ENCODE measurements at regions of chr1 and their contacts with region 1.

Region 1: GRCh38 chr1:154220071-154220969 is at the start of gene UBAP2L:
- DNase-seq: peak; percentile 97 to 100 (median 99)
- ATAC-seq: peak; percentile 83
- H3K4me3 ChIP-seq: peak within 1 kb of the TSS; percentile 95
- H3K4me3 Mint-ChIP-seq: peak within 1 kb of the TSS; percentile 91
- H3K27ac ChIP-seq: peak within 1 kb of the TSS; percentile 99
- H3K27ac Mint-ChIP-seq: peak within 1 kb of the TSS; percentile 93
- H3K4me1 ChIP-seq: peaks cover 43% of the 10 kb centered on the region
- H3K4me1 Mint-ChIP-seq: peaks cover 74% of the 10 kb centered on the region
- H3K27me3 ChIP-seq: no peaks in the 10 kb centered on the region
- H3K27me3 Mint-ChIP-seq: no peaks in the 10 kb centered on the region
- CTCF ChIP-seq: no peak
- total RNA-seq, gene UBAP2L: 224 to 234 TPM

Region 2: GRCh38 chr1:153922972-153923925 is 297.1 kb before region 1 on chr1 and contains the start of gene GATAD2B:
- CTCF ChIA-PET with region 1: no interaction called
- POLR2A ChIA-PET with region 1: interaction called, 5 read pairs
- intact Hi-C with region 1: loop called in 1 of 2 experiments (anchors 10 kb)
- DNase-seq: peak; percentile 97 to 100 (median 98)
- ATAC-seq: peak; percentile 89
- H3K4me3 ChIP-seq: peak within 1 kb of the TSS; percentile 91
- H3K4me3 Mint-ChIP-seq: peak within 1 kb of the TSS; percentile 96
- H3K27ac ChIP-seq: peak within 1 kb of the TSS; percentile 95
- H3K27ac Mint-ChIP-seq: peak within 1 kb of the TSS; percentile 99
- H3K4me1 ChIP-seq: peaks cover 48% of the 10 kb centered on the region
- H3K4me1 Mint-ChIP-seq: peaks cover 56% of the 10 kb centered on the region
- H3K27me3 ChIP-seq: no peaks in the 10 kb centered on the region
- H3K27me3 Mint-ChIP-seq: peaks cover 6% of the 10 kb centered on the region
- CTCF ChIP-seq: no peak
- total RNA-seq, gene GATAD2B: 51.6 to 52.3 TPM

Region 3: DNA sequence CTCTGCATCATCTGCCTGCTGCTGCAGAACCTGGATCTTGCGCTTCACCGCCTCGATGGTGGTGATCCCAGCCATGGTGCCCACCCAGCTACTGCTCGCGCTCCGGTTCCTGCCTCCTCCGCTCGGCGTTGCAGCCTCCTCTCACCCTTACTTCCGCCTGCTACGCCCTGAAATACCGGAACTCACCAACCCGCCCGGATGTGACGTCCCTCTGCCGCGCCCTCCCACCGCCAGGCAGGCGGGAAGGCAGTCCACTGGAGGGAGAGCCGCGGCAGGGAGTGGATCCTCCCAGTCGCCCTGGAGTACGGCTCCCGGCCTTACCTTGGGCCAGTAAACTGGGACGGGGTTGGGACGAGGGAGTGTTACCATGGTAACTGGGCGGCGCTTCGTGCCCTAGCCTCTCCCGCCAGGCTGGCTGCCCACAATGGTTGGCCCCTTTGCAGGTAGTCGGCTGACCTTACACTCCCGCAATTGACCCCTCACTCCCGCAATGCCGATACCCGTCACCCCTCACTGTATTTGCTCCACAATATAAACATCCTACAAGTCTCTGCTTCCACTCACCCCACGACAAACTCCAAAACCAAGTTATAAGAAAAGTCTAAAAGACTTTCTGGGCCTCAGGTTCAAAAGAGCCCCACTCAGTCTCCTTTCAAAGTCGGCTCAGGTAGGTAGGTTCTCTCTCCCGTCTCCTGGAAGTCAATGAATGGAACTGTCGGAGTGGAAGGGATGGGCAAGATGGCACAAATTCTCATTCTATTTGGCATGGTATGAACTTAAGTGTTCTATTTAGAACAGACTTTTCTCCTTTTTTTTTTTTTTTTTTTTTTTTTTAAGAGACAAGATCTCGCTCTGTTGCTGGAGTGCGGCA is 37.0 kb before region 1 on chr1:
- CTCF ChIA-PET with region 1: no interaction called
- POLR2A ChIA-PET with region 1: interaction called, 5 read pairs
- intact Hi-C with region 1: loop called (anchors 1 kb)
- DNase-seq: peak; percentile 85 to 96 (median 92)
- ATAC-seq: peak; percentile 78
- H3K4me3 ChIP-seq: peak overlapping the region; percentile 88
- H3K4me3 Mint-ChIP-seq: peak overlapping the region; percentile 97
- H3K27ac ChIP-seq: peak overlapping the region; percentile 90 to 93
- H3K27ac Mint-ChIP-seq: peak overlapping the region; percentile 96
- H3K4me1 ChIP-seq: peaks cover 46% of the 10 kb centered on the region
- H3K4me1 Mint-ChIP-seq: peaks cover 54% of the 10 kb centered on the region
- H3K27me3 ChIP-seq: no peaks in the 10 kb centered on the region
- H3K27me3 Mint-ChIP-seq: peaks cover 5% of the 10 kb centered on the region
- CTCF ChIP-seq: no peak

Region 4: GRCh38 chr1:154263465-154264332 is 43.4 kb after region 1 on chr1:
- CTCF ChIA-PET with region 1: no interaction called
- POLR2A ChIA-PET with region 1: interaction called, 6 read pairs
- intact Hi-C with region 1: loop called in 1 of 2 experiments (anchors 2 kb)
- DNase-seq: no peak
- ATAC-seq: no peak
- H3K4me3 ChIP-seq: no peak overlapping the region
- H3K4me3 Mint-ChIP-seq: no peak overlapping the region
- H3K27ac ChIP-seq: peak overlapping the region in 1 of 2 donors; percentile 81
- H3K27ac Mint-ChIP-seq: peak overlapping the region; percentile 91
- H3K4me1 ChIP-seq: peaks cover 16% of the 10 kb centered on the region
- H3K4me1 Mint-ChIP-seq: peaks cover 46% of the 10 kb centered on the region
- H3K27me3 ChIP-seq: no peaks in the 10 kb centered on the region
- H3K27me3 Mint-ChIP-seq: no peaks in the 10 kb centered on the region
- CTCF ChIP-seq: no peak

Region 5: GRCh38 chr1:154324669-154325582 is 104.6 kb after region 1 on chr1 and contains the start of gene ATP8B2:
- CTCF ChIA-PET with region 1: no interaction called
- POLR2A ChIA-PET with region 1: interaction called, 10 read pairs
- intact Hi-C with region 1: loop called (anchors 1 to 5 kb)
- DNase-seq: peak; percentile 68 to 90 (median 74)
- ATAC-seq: peak; percentile 57
- H3K4me3 ChIP-seq: peak within 1 kb of the TSS; percentile 70
- H3K4me3 Mint-ChIP-seq: peak within 1 kb of the TSS; percentile 94
- H3K27ac ChIP-seq: peak within 1 kb of the TSS; percentile 80 to 86
- H3K27ac Mint-ChIP-seq: peak within 1 kb of the TSS; percentile 90
- H3K4me1 ChIP-seq: peaks cover 52% of the 10 kb centered on the region
- H3K4me1 Mint-ChIP-seq: peaks cover 36% of the 10 kb centered on the region
- H3K27me3 ChIP-seq: no peaks in the 10 kb centered on the region
- H3K27me3 Mint-ChIP-seq: no peaks in the 10 kb centered on the region
- CTCF ChIP-seq: peak; percentile 95
- total RNA-seq, gene ATP8B2: 72.7 to 80.7 TPM

Measured in CD4-positive, alpha-beta T cell (primary cell).